Sigmoid colon (tissue), 7 donors: ENCODE measurements at regions of chr1 and their contacts with region 1.

Region 1: DNA sequence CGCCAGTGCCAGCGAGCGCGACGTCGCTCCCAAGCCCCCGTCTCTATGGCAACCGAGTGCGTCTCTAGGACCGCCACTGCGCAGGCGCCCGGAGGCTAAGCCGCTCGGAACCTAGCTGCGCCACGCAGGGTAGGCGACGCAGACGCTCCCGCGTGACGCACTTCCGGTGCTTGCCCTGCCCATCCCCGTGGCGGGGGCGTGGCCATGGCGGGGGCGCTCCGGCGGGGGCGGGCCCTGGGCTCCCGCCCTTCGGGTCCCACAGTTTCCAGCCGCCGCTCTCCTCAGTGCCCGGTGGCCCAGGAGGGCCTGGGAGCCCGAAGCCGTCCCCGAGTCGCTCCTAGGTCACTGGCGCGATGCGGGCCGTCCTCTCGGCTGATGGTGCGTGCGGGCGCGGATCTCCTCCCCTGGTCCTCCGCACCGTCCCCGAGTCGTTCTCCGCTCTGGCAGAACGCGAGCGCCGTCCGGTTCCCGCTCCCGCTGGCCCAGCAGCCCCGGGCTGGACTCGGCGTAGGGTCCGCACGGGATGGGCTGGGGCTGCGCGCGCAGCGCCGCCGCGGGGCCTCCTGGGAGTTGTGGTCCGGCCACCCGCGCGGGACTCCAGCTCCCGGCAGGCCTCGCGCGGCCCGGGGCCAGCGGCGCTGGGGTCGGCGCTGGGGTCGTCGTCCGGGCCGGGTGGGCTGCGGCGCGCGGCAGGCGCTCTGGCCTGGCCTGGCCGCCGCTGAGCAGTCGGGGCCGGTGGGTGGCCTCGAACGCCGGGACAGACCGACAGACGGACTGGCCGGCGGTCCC is at the start of gene MIB2:
- DNase-seq: peak; percentile 98
- H3K4me3 ChIP-seq: peak within 1 kb of the TSS; percentile 72 to 99 (median 98)
- H3K27ac ChIP-seq: peak within 1 kb of the TSS; percentile 100
- H3K4me1 ChIP-seq: peaks cover 0 to 37% (median 32%) of the 10 kb centered on the region in 4 donors
- H3K27me3 ChIP-seq: no peaks in the 10 kb centered on the region
- CTCF ChIP-seq: no peak
- EP300 ChIP-seq: peak in 1 of 4 donors; percentile 66
- POLR2A ChIP-seq: peak; percentile 53 to 72
- total RNA-seq, gene MIB2: 32.7 to 95.3 (median 53.6) TPM

Region 2: GRCh38 chr1:1574721-1575537 is 40.5 kb before region 1 on chr1 and contains the start of gene SSU72:
- intact Hi-C with region 1: loop called (anchors 2 kb)
- DNase-seq: peak; percentile 97
- H3K4me3 ChIP-seq: peak within 1 kb of the TSS; percentile 95 to 100 (median 98)
- H3K27ac ChIP-seq: peak within 1 kb of the TSS; percentile 97 to 100 (median 99)
- H3K4me1 ChIP-seq: peaks cover 0 to 44% (median 37%) of the 10 kb centered on the region in 4 donors
- H3K27me3 ChIP-seq: no peaks in the 10 kb centered on the region
- CTCF ChIP-seq: no peak
- EP300 ChIP-seq: peak in 2 of 4 donors; percentile 17 to 18
- POLR2A ChIP-seq: peak; percentile 93
- total RNA-seq, gene SSU72: 98.9 to 119 (median 109) TPM